HepG2 (cell line): ENCODE measurements at regions of chr14 and their contacts with region 1.

Region 1: DNA sequence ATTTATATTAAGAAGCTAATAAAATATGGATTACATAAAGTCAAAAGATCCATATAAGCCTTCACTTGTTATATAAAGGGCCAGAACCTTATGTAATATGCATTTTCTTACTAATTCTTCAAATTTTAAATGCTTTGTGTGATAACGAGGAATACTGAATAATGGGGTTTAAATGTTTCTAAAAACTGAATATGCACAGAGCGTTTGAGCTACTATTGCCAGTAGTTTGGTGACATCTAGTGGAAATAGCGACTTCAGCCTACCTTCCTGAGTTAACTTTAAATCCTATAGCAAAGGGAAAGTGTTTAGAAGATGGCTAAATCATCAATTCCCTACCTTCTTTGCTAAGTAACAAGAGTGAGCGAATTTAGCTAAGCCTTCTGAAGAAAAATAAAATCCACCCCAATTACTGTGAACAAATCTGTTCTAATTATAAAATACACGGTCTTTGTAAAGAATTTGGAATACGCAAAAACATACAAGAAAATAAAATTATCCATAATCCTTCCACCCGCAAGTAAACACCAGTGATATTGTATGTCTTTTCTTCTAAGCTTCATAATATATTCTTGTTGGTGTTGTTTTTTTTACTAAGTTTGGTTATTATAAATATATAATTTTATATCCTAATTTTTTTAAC is 115.5 kb upstream of the G2E3 start:
- DNase-seq: peak; percentile 77
- ATAC-seq: peak; percentile 88
- H3K4me3 ChIP-seq: no peak overlapping the region
- H3K27ac ChIP-seq: no peak overlapping the region
- H3K4me1 ChIP-seq: no peaks in the 10 kb centered on the region
- H3K27me3 ChIP-seq: no peaks in the 10 kb centered on the region
- CTCF ChIP-seq: peak; percentile 91
- EP300 ChIP-seq: no peak
- POLR2A ChIP-seq: no peak
- RAD21 ChIP-seq: no peak; the same call in none of the 2 replicates

Region 2: DNA sequence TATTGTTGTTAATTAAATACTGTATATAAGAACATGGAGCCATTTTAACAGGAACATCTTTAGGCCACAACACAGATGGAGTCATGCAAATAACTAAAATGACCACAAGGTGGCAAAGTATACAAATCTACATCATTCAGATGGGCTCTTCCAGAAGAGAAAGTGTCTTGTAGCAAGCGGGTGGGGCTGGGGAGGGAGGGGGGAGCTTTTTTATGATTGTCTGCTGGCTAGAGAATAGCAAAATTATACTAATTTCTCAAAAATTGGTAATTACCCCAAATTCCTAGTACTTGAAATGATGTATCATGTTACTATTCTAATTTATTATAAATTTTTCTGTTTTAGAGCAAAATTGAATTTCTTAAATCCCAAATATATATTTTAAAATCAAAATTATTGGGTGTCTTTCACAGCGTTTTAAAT is 894.5 kb before region 1 on chr14:
- CTCF ChIA-PET with region 1: interaction called, 11 read pairs
- POLR2A ChIA-PET with region 1: no interaction called
- in situ Hi-C with region 1: loop called (anchors 5 kb)
- intact Hi-C with region 1: no loop called
- DNase-seq: peak; percentile 70
- ATAC-seq: peak; percentile 95
- H3K4me3 ChIP-seq: no peak overlapping the region
- H3K27ac ChIP-seq: no peak overlapping the region
- H3K4me1 ChIP-seq: no peaks in the 10 kb centered on the region
- H3K27me3 ChIP-seq: no peaks in the 10 kb centered on the region
- CTCF ChIP-seq: peak; percentile 75
- EP300 ChIP-seq: no peak
- POLR2A ChIP-seq: no peak
- RAD21 ChIP-seq: no peak

Region 3: GRCh38 chr14:30214461-30215090 is 228.9 kb before region 1 on chr14:
- CTCF ChIA-PET with region 1: no interaction called
- POLR2A ChIA-PET with region 1: no interaction called
- in situ Hi-C with region 1: no loop called
- intact Hi-C with region 1: loop called (anchors 1 kb)
- DNase-seq: peak; percentile 75
- ATAC-seq: peak; percentile 91
- H3K4me3 ChIP-seq: no peak overlapping the region
- H3K27ac ChIP-seq: no peak overlapping the region
- H3K4me1 ChIP-seq: no peaks in the 10 kb centered on the region
- H3K27me3 ChIP-seq: no peaks in the 10 kb centered on the region
- CTCF ChIP-seq: peak; percentile 87
- EP300 ChIP-seq: no peak
- POLR2A ChIP-seq: no peak
- RAD21 ChIP-seq: peak; percentile 79

Region 4: DNA sequence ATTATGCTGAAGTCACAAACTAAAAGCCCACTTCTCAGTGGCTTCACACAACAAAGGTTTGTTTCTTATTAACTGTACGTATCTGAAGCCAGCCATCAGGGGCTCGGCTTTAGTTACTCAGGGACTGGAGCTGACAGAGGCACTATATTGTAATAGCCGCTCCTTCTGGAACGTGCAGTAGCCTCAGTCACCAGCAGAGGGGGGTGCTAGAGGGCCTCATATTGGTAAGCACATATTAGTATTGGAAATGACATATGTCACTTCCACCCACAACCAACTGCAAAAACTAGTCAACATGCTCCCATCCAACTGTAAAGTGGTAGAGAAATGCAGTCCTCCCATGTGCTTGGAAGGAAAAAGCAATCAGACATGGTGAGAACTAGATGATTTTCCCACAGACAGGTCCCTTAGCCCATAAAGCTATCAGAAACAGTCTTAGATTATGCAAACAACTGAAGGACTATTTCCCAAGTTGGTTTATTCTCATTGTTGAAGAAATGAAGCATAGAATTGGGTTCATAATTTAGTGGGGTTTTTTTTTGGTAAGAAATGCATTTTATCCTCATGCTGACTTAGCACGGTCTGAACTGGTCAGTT is 68.1 kb before region 1 on chr14:
- CTCF ChIA-PET with region 1: interaction called, 98 read pairs
- POLR2A ChIA-PET with region 1: no interaction called
- in situ Hi-C with region 1: no loop called
- intact Hi-C with region 1: loop called (anchors 1 kb)
- DNase-seq: peak; percentile 76
- ATAC-seq: peak; percentile 100
- H3K4me3 ChIP-seq: no peak overlapping the region
- H3K27ac ChIP-seq: no peak overlapping the region
- H3K4me1 ChIP-seq: no peaks in the 10 kb centered on the region
- H3K27me3 ChIP-seq: no peaks in the 10 kb centered on the region
- CTCF ChIP-seq: peak; percentile 96
- EP300 ChIP-seq: no peak
- POLR2A ChIP-seq: no peak
- RAD21 ChIP-seq: peak; percentile 80